ENCODE measurements at regions of chr10 and their contacts with region 1.

Region 1: GRCh38 chr10:86960003-86960862 is 1.8 kb downstream of the SNCG start:
- DNase-seq: peak in 1 of 2 donors; percentile 64
- ATAC-seq: peak; percentile 36 to 64 (median 54)
- H3K4me3 ChIP-seq: peak overlapping the region in 9 of 10 donors; percentile 16 to 68 (median 60)
- H3K27ac ChIP-seq: peak overlapping the region; percentile 85 to 97 (median 90)
- H3K4me1 ChIP-seq: peaks cover 17 to 54% (median 42%) of the 10 kb centered on the region in 9 donors
- H3K27me3 ChIP-seq: no peaks in the 10 kb centered on the region
- CTCF ChIP-seq: peak; percentile 86 to 96 (median 94)

Region 2: GRCh38 chr10:86936661-86937501 is 23.4 kb before region 1 on chr10:
- intact Hi-C with region 1: loop called in 5 of 10 experiments (anchors 1 to 2 kb)
- DNase-seq: no peak
- ATAC-seq: no peak
- H3K4me3 ChIP-seq: no peak overlapping the region
- H3K27ac ChIP-seq: no peak overlapping the region
- H3K4me1 ChIP-seq: peaks cover 0 to 24% (median 15%) of the 10 kb centered on the region in 9 donors
- H3K27me3 ChIP-seq: no peaks in the 10 kb centered on the region
- CTCF ChIP-seq: no peak

Region 3: GRCh38 chr10:86944471-86944870 is 15.8 kb before region 1 on chr10:
- intact Hi-C with region 1: loop called in 5 of 10 experiments (anchors 1 to 2 kb)
- DNase-seq: no peak
- ATAC-seq: no peak
- H3K4me3 ChIP-seq: no peak overlapping the region
- H3K27ac ChIP-seq: peak overlapping the region in 1 of 10 donors; percentile 34
- H3K4me1 ChIP-seq: peaks cover 6 to 70% (median 29%) of the 10 kb centered on the region in 9 donors
- H3K27me3 ChIP-seq: no peaks in the 10 kb centered on the region
- CTCF ChIP-seq: no peak